ENCODE measurements at regions of chr5 and their contacts with region 1.

Region 1: GRCh38 chr5:81425569-81425968 is 31.6 kb upstream of the ACOT12 start:
- DNase-seq: no peak
- H3K4me3 ChIP-seq: no peak overlapping the region
- H3K27ac ChIP-seq: no peak overlapping the region
- H3K4me1 ChIP-seq: no peaks in the 10 kb centered on the region
- H3K27me3 ChIP-seq: no peaks in the 10 kb centered on the region
- CTCF ChIP-seq: peak; percentile 41 to 71 (median 58)
- POLR2A ChIP-seq: no peak

Region 2: DNA sequence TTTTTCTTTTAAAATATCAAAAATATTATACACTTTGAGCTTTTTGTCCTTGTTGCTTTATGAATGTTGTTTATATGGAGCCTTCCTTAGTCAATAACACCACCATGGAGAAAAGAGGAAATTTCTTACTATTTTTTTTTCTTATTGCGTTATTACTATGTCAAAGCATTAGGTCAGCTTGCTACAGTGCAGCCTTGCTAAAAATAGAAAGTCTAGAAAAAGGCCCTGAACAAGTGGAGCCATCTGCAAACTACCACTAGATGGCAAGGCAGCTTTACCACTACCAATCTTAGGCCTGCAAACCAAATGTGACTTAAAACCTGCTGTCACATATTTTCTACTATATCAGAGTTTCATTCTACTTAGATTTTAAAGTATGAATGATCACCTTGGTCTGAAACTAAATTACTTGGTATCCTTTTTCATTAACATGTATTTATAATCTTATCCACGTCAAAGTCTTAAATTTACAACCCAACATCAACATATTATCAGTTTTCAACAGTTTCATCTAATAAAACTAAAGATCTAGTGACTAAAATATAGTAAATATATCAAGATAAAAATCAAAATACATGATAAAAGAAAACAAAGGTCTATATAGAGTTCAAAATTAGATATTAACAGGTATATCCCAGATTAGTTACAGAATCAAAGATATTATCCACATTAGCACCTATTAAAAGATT is 81.5 kb after region 1 on chr5:
- intact Hi-C with region 1: loop called (anchors 2 kb)
- DNase-seq: peak; percentile 57
- H3K4me3 ChIP-seq: no peak overlapping the region
- H3K27ac ChIP-seq: no peak overlapping the region
- H3K4me1 ChIP-seq: no peaks in the 10 kb centered on the region
- H3K27me3 ChIP-seq: no peaks in the 10 kb centered on the region
- CTCF ChIP-seq: peak; percentile 55 to 85 (median 76)
- POLR2A ChIP-seq: no peak

Region 3: GRCh38 chr5:81851481-81852178 is 426.1 kb after region 1 on chr5:
- intact Hi-C with region 1: loop called (anchors 5 kb)
- DNase-seq: peak; percentile 94
- H3K4me3 ChIP-seq: peak overlapping the region; percentile 32 to 36
- H3K27ac ChIP-seq: peak overlapping the region; percentile 75 to 82
- H3K4me1 ChIP-seq: no peaks in the 10 kb centered on the region
- H3K27me3 ChIP-seq: no peaks in the 10 kb centered on the region
- CTCF ChIP-seq: peak in 2 of 4 experiments; percentile 29 to 31
- POLR2A ChIP-seq: peak; percentile 29

Region 4: GRCh38 chr5:81971712-81972495 is 546.3 kb after region 1 on chr5 and contains the start of gene ATG10:
- intact Hi-C with region 1: loop called (anchors 5 kb)
- DNase-seq: peak; percentile 87
- H3K4me3 ChIP-seq: peak within 1 kb of the TSS; percentile 68 to 79
- H3K27ac ChIP-seq: peak within 1 kb of the TSS; percentile 98
- H3K4me1 ChIP-seq: no peaks in the 10 kb centered on the region
- H3K27me3 ChIP-seq: no peaks in the 10 kb centered on the region
- CTCF ChIP-seq: no peak
- POLR2A ChIP-seq: peak; percentile 94
- total RNA-seq, gene ATG10: 3.2 to 16.7 TPM

Region 5: GRCh38 chr5:82165740-82166530 is 740.4 kb after region 1 on chr5:
- intact Hi-C with region 1: loop called (anchors 5 kb)
- DNase-seq: peak; percentile 78
- H3K4me3 ChIP-seq: no peak overlapping the region
- H3K27ac ChIP-seq: peak overlapping the region; percentile 37 to 39
- H3K4me1 ChIP-seq: peaks cover 5% of the 10 kb centered on the region
- H3K27me3 ChIP-seq: no peaks in the 10 kb centered on the region
- CTCF ChIP-seq: peak in 3 of 4 experiments; percentile 71 to 84 (median 81)
- POLR2A ChIP-seq: no peak

Region 6: GRCh38 chr5:82225525-82226172 is 800.1 kb after region 1 on chr5:
- intact Hi-C with region 1: loop called (anchors 5 kb)
- DNase-seq: peak; percentile 48
- H3K4me3 ChIP-seq: no peak overlapping the region
- H3K27ac ChIP-seq: no peak overlapping the region
- H3K4me1 ChIP-seq: no peaks in the 10 kb centered on the region
- H3K27me3 ChIP-seq: no peaks in the 10 kb centered on the region
- CTCF ChIP-seq: peak; percentile 58 to 75 (median 70)
- POLR2A ChIP-seq: no peak